ENCODE measurements at regions of chr7 and their contacts with region 1.

Region 1: DNA sequence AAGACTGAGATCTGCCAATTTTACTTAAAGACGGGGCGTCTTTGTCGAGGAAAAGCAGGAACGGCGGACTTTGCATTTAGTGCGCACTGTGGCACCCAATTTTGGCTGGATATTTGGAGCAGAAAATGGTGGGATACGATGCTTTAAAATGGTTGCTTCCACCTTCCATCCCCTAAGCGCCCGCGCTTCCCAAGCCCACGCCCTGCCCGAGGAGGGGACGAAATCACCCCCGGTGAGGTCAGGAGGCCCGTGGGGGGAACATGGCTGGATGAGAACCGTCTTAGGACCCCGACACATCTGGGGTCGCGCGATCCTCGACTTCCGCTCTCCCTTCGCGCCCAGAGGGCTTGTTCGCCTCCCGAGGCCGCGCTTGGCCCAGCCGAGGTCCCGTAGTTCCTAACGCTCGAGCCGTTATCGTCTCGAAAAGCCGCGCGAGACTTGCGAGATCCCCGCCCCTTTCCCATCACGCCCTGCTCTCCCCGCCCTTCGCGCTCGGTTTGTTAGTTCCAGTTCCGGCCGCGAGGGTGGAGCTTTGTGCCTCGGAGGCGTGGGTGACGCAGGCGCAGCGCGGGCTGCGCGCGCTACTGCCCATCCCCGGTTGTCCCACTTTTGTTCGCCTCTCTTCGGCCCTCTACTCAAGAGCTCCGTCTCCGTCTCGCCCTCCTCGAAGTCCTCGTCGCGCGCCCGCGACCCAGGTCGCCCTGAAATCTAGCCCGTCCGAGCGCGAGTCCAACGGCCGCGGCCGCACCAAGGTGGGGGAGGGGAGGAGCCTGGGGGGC is at the start of gene SRRT:
- DNase-seq: peak; percentile 95 to 97
- H3K4me3 ChIP-seq: peak within 1 kb of the TSS; percentile 81 to 93 (median 91)
- H3K27ac ChIP-seq: peak within 1 kb of the TSS; percentile 93
- H3K4me1 ChIP-seq: peaks cover 0 to 9% (median 1%) of the 10 kb centered on the region in 4 experiments; a peak in 3 of 7 replicates
- H3K27me3 ChIP-seq: no peaks in the 10 kb centered on the region
- CTCF ChIP-seq: peak in 1 of 3 experiments; percentile 19; a peak in 1 of 4 replicates
- EP300 ChIP-seq: no peak; a peak in 1 of 3 replicates
- POLR2A ChIP-seq: peak in 1 of 2 experiments; percentile 98; a peak in 2 of 3 replicates
- RAD21 ChIP-seq: no peak
- total RNA-seq, gene SRRT: 237 and 239 TPM in 2 replicates

Region 2: DNA sequence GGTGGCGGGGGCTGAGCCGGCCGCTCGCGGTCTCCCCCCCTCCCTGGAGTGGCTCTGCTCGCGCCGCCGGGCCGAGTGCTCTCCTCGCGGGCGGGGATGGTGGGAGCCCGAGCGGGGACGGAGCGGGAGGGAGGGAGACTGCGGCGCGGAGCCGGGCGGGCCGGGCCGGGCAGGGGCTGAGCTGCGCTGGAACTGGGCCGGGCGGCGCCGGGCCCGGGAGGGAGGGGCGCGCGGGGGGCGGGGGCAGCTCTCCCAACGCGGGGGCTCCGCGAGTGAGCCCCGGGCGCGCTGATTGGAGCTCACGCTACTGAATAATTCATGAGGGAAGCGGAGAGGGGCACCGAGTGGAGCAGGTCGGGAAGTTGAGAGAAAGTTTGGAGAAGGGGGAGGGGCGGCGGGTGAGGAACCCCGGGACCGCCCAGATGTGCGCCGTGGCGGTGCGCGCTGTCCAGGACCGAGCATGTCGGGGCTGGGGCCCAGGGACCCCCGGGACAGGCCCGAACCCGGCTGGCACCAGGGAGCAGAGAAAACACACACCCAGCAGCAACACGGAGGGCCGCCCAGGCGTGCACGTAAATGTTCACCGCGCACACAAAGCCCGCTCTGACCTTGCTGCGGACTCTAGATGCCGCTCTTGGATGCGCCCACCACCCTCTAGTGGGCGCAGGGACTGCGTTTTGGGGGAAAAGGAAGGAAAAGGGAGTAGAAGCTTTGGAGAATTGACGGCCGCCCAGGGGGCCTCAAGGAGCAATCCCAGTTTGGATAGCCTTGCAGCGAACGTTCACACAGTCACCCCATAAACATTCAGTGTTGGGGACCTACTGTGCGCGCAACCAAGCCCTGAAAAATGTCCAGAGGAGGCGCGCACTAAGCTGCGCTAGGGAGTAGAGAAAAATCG is 47.2 kb before region 1 on chr7 and contains the start of gene EPHB4:
- CTCF ChIA-PET with region 1: interaction called, 4 read pairs
- POLR2A ChIA-PET with region 1: interaction called, 10 read pairs
- DNase-seq: peak in 1 of 2 experiments; percentile 93
- H3K4me3 ChIP-seq: peak within 1 kb of the TSS; percentile 88 to 100 (median 92)
- H3K27ac ChIP-seq: peak within 1 kb of the TSS; percentile 81
- H3K4me1 ChIP-seq: peaks cover 0 to 13% (median 10%) of the 10 kb centered on the region in 4 experiments; a peak in 6 of 7 replicates
- H3K27me3 ChIP-seq: no peaks in the 10 kb centered on the region
- CTCF ChIP-seq: peak; percentile 55 to 63 (median 61)
- EP300 ChIP-seq: no peak
- POLR2A ChIP-seq: peak in 1 of 2 experiments; percentile 30; a peak in 1 of 3 replicates
- RAD21 ChIP-seq: peak; percentile 30 to 60; a peak in 3 of 4 replicates
- total RNA-seq, gene EPHB4: 113 and 122 TPM in 2 replicates

Region 3: GRCh38 chr7:100837099-100837836 is 37.5 kb before region 1 on chr7:
- CTCF ChIA-PET with region 1: interaction called, 3 read pairs
- POLR2A ChIA-PET with region 1: interaction called, 14 read pairs
- DNase-seq: peak; percentile 83 to 88
- H3K4me3 ChIP-seq: peak overlapping the region; percentile 29 to 67 (median 56)
- H3K27ac ChIP-seq: peak overlapping the region; percentile 94
- H3K4me1 ChIP-seq: peaks cover 3 to 10% (median 8%) of the 10 kb centered on the region in 4 experiments
- H3K27me3 ChIP-seq: no peaks in the 10 kb centered on the region
- CTCF ChIP-seq: no peak
- EP300 ChIP-seq: no peak
- POLR2A ChIP-seq: no peak; a peak in 1 of 3 replicates
- RAD21 ChIP-seq: no peak